ENCODE measurements at regions of chr14 and their contacts with region 1.

Region 1: GRCh38 chr14:102086972-102087761 is at the start of gene HSP90AA1:
- DNase-seq: peak; percentile 91 to 96 (median 93)
- H3K4me3 ChIP-seq: peak within 1 kb of the TSS; percentile 90
- H3K4me3 Mint-ChIP-seq: peak within 1 kb of the TSS; percentile 95 to 99 (median 98)
- H3K27ac ChIP-seq: peak within 1 kb of the TSS; percentile 95
- H3K27ac Mint-ChIP-seq: peak within 1 kb of the TSS; percentile 96 to 100 (median 99)
- H3K4me1 ChIP-seq: peaks cover 54% of the 10 kb centered on the region
- H3K4me1 Mint-ChIP-seq: peaks cover 58 to 63% (median 62%) of the 10 kb centered on the region in 3 donors
- H3K27me3 ChIP-seq: no peaks in the 10 kb centered on the region
- H3K27me3 Mint-ChIP-seq: peaks cover 0 to 13% of the 10 kb centered on the region in 2 donors
- total RNA-seq, gene HSP90AA1: 1,459 to 1,586 TPM

Region 2: DNA sequence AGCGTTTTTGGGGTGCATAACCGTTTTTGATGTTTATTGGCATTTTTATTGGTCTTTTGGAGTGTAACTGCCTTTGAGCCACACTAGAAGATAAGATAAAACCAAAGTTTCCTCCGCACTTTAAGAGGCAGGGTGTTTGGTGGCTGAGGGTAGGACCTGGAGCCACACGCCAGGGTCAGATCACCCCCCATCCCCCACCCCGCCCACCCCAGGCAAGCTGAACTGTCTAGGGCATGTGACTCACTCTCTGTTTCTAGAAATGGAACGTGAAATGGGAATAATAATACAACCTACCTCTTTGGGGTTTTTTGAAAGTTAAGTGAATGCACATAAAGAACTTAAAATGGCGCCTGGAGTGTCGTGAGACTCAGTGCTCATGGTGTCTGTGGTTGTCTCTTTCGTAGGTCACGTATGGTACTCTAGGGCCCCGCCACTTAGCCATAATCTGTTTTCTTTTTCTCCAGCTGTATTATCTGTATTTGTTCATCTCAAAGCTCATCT is 269.6 kb before region 1 on chr14:
- CTCF ChIA-PET with region 1: no interaction called
- POLR2A ChIA-PET with region 1: interaction called, 23 read pairs
- DNase-seq: peak in 4 of 5 donors; percentile 37 to 76 (median 64)
- H3K4me3 ChIP-seq: peak overlapping the region; percentile 48
- H3K4me3 Mint-ChIP-seq: peak overlapping the region; percentile 77 to 95 (median 90)
- H3K27ac ChIP-seq: peak overlapping the region; percentile 96
- H3K27ac Mint-ChIP-seq: peak overlapping the region; percentile 96 to 100 (median 99)
- H3K4me1 ChIP-seq: peaks cover 91% of the 10 kb centered on the region
- H3K4me1 Mint-ChIP-seq: peaks cover 89 to 97% (median 96%) of the 10 kb centered on the region in 3 donors
- H3K27me3 ChIP-seq: no peaks in the 10 kb centered on the region
- H3K27me3 Mint-ChIP-seq: peaks cover 0 to 6% of the 10 kb centered on the region in 2 donors

Region 3: GRCh38 chr14:102063091-102063802 is 23.9 kb before region 1 on chr14:
- CTCF ChIA-PET with region 1: interaction called, 20 read pairs
- POLR2A ChIA-PET with region 1: interaction called, 5 read pairs
- DNase-seq: peak; percentile 55 to 82 (median 65)
- H3K4me3 ChIP-seq: no peak overlapping the region
- H3K4me3 Mint-ChIP-seq: no peak overlapping the region
- H3K27ac ChIP-seq: no peak overlapping the region
- H3K27ac Mint-ChIP-seq: no peak overlapping the region
- H3K4me1 ChIP-seq: peaks cover 1% of the 10 kb centered on the region
- H3K4me1 Mint-ChIP-seq: peaks cover 10 to 19% (median 18%) of the 10 kb centered on the region in 3 donors
- H3K27me3 ChIP-seq: no peaks in the 10 kb centered on the region
- H3K27me3 Mint-ChIP-seq: no peaks in the 10 kb centered on the region

Region 4: GRCh38 chr14:102262929-102263462 is 175.8 kb after region 1 on chr14:
- CTCF ChIA-PET with region 1: no interaction called
- POLR2A ChIA-PET with region 1: no interaction called
- DNase-seq: no peak
- H3K4me3 ChIP-seq: no peak overlapping the region
- H3K4me3 Mint-ChIP-seq: no peak overlapping the region
- H3K27ac ChIP-seq: no peak overlapping the region
- H3K27ac Mint-ChIP-seq: no peak overlapping the region
- H3K4me1 ChIP-seq: no peaks in the 10 kb centered on the region
- H3K4me1 Mint-ChIP-seq: no peaks in the 10 kb centered on the region
- H3K27me3 ChIP-seq: no peaks in the 10 kb centered on the region
- H3K27me3 Mint-ChIP-seq: peaks cover 0 to 1% of the 10 kb centered on the region in 2 donors

Measured in CD8-positive, alpha-beta memory T cell (primary cell).